ENCODE measurements at regions of chr3 and their contacts with region 1.

Region 1: DNA sequence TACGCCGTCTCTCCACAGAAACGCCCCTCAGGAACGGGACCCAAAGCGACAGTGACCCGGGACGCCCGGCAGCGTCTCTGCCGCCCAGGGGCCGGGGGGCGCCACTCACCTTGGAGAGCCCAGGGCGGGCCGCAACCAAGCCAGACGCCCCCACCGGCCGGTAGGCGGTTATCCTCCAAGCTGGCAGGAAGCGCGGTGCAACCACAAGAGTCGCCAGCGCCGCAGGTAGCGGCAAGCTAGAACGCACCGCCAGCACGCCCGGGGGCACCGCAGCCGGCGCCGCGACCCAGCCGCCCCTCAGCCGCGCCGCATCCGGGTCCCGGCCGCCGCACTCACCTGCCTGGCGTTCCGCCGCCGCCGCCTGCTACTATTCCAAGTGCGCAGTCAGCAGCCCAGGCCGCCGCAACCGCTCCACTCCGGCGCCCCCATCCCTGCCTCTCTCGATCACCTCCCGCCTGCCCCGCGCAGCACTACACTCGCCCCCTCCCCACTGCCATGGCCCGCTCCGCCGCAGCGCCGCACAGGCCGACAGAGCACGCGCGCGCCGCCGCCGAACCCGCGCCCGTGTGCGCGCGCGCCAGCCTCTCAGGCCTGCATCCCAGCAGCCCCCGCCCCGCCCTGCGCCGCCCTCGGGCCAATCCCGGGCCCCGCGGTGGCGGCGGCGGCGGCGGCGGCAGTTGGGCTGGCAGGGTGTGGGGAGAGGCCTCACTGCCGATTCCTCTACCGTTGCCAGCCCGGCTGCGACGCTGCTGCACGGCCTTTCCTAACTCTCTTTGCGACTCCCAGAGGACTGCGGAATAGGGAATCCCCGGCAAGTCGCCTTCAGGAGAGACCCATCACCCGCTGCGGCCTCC is at the start of gene PIK3CB:
- DNase-seq: peak; percentile 88 to 95
- ATAC-seq: peak; percentile 94
- total RNA-seq, gene PIK3CB: 54.9 to 55.9 TPM

Region 2: GRCh38 chr3:138594150-138594934 is 240.2 kb before region 1 on chr3 and contains the start of gene CEP70:
- intact Hi-C with region 1: loop called in 1 of 2 experiments (anchors 10 kb)
- DNase-seq: peak; percentile 97
- ATAC-seq: peak; percentile 87
- total RNA-seq, gene CEP70: 35.8 to 36.4 TPM

Measured in left colon (tissue), 2 donors.